Activated CD4-positive, alpha-beta T cell treated with anti-CD3 and anti-CD28 coated beads, Interleukin-2, amount 10 ng/mL, durations not matched to agents 24 days and 14 days (primary cell): ENCODE measurements at regions of chr4 and their contacts with region 1.

Region 1: DNA sequence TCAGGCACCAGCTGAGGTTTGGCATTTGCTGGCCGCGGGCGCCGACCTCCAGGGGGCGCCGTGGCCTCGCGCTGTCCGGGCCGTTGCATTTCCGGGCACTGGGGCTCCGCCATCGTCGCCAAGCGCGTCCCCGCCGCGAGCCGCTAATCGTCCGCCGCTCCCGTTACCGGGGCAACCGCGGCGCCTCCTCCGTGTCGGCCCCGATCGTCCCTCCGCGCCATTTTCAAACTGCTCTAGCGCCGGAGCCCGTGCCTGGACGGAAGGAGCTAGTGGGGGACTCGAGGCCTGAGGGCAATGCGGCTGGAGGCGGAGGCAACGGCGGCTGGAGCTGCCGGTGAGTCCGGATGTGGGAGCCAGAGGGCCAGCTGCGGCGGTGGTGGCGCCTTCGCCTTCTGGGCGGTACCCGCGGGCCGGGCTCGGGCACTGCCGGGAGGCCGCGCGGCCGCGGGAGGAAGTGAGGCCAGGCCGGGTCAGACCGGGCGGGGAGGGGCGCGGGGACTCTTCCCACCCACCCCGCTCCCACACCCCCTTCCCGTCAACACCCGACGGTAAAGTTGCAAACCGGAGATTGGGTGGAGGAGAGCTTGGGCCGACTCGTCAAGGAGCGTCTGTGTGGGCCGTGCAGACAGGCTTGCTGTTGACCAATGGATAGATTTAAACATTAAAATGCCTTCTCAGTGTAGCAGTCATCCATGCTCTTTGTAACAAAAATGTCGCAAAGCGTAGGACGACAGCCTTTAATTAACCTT is at the start of gene CEP135:
- DNase-seq: peak; percentile 98
- H3K4me3 Mint-ChIP-seq: peak within 1 kb of the TSS; percentile 87
- H3K27ac Mint-ChIP-seq: peak within 1 kb of the TSS; percentile 89
- H3K4me1 Mint-ChIP-seq: peaks cover 33% of the 10 kb centered on the region
- H3K27me3 Mint-ChIP-seq: no peaks in the 10 kb centered on the region
- total RNA-seq, gene CEP135: 16.3 and 16.9 TPM in 2 replicates

Region 2: DNA sequence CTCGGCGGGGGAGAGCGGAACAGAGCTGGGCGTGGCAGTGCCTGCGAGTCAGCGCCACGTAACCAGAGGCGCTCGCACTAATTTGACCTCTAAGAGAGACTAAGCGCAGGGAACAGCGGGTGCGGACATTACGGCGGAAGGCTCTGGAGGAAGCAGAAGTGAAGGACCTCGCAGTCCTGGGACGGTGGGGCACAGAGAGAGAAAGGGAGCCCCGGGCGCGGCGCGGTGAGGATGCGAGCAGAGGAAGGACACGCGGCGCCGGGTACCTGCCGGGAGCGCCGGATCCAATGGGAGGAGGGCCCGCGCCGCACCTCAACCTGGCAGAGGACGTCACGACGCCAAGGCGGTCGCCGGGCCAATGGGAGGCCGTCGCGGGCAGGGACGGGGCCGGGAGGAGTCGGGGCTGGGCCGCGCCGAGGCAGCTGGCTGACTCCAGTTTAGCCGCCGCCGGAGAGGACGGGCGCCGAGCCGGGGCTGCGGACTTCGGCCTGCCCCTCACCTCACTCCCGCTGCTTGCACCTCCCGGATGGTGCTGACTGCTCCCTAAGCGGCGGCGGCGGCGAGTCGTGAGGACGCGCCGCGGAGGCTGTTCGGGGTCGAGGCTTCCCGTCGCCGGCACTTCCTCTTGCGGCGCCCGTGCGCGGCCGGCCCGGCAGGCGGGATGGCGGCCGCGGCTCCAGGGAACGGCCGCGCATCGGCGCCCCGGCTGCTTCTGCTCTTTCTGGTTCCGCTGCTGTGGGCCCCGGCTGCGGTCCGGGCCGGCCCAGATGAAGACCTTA is 553.2 kb before region 1 on chr4 and contains the start of gene TMEM165:
- intact Hi-C with region 1: loop called (anchors 5 kb)
- DNase-seq: peak; percentile 97
- H3K4me3 Mint-ChIP-seq: peak within 1 kb of the TSS; percentile 100
- H3K27ac Mint-ChIP-seq: peak within 1 kb of the TSS; percentile 97
- H3K4me1 Mint-ChIP-seq: peaks cover 33% of the 10 kb centered on the region
- H3K27me3 Mint-ChIP-seq: no peaks in the 10 kb centered on the region
- total RNA-seq, gene TMEM165: 87.2 and 99.1 TPM in 2 replicates

Region 3: GRCh38 chr4:55503164-55503563 is 445.7 kb before region 1 on chr4:
- intact Hi-C with region 1: no loop called
- DNase-seq: no peak
- H3K4me3 Mint-ChIP-seq: no peak overlapping the region
- H3K27ac Mint-ChIP-seq: no peak overlapping the region
- H3K4me1 Mint-ChIP-seq: peaks cover 2% of the 10 kb centered on the region
- H3K27me3 Mint-ChIP-seq: no peaks in the 10 kb centered on the region

Region 4: GRCh38 chr4:55866973-55867574 is 81.8 kb before region 1 on chr4:
- intact Hi-C with region 1: loop called (anchors 1 kb)
- DNase-seq: peak; percentile 69
- H3K4me3 Mint-ChIP-seq: no peak overlapping the region
- H3K27ac Mint-ChIP-seq: no peak overlapping the region
- H3K4me1 Mint-ChIP-seq: peaks cover 19% of the 10 kb centered on the region
- H3K27me3 Mint-ChIP-seq: no peaks in the 10 kb centered on the region

Region 5: DNA sequence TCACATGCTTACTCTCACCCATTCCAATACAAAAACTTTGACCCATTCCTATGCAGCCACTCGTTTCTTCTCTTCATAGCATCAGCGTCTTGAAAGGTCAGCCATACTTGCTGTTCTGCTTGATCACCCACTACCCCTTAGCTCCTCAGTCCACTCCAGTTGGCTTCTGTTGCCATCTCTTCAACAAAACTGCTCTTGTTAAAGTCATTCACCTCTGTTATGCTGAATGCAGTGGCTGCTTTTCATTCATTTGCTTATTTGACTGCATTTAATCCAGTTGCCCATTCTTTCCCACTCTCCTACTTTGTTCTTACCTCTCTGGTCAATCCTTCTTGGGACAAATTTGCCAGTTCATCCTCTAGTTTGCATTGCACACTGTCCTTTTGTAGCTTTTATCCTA is 24.8 kb after region 1 on chr4:
- intact Hi-C with region 1: no loop called
- DNase-seq: no peak
- H3K4me3 Mint-ChIP-seq: no peak overlapping the region
- H3K27ac Mint-ChIP-seq: no peak overlapping the region
- H3K4me1 Mint-ChIP-seq: no peaks in the 10 kb centered on the region
- H3K27me3 Mint-ChIP-seq: no peaks in the 10 kb centered on the region

Region 6: DNA sequence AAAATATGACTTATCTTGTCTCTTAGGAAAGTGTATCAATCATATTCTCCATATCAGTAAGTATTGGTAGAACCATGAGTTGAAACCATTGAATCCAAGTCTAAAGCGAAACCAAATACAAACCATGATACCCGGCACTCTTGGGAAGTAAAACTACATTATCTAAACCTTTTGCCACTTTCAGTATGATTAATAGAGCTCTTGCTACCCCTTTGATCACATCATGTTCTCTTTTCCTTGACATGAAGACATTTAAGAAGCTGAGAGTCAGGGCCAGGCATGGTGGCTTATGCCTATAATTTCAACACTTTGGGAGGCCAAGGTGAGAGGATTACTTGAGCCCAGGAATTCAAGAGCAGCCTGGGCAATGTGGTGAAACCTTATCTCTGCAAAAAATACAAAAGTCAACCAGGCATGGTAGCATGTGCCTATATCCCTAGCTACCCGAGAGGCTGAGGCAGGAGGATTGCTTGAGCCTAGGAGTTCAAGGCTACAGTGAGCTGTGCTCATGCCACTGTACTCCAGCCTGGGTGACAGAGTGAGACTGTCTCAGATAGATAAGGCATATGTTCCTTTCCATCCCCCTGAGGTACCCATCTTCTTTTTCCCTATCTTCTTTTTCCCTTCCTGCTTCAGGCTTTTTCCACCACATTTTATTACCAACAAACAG is 45.2 kb after region 1 on chr4:
- intact Hi-C with region 1: loop called (anchors 1 kb)
- DNase-seq: peak; percentile 64
- H3K4me3 Mint-ChIP-seq: peak overlapping the region; percentile 35
- H3K27ac Mint-ChIP-seq: peak overlapping the region; percentile 62
- H3K4me1 Mint-ChIP-seq: peaks cover 25% of the 10 kb centered on the region
- H3K27me3 Mint-ChIP-seq: no peaks in the 10 kb centered on the region

Region 7: GRCh38 chr4:56007154-56007553 is 58.3 kb after region 1 on chr4:
- intact Hi-C with region 1: no loop called
- DNase-seq: no peak
- H3K4me3 Mint-ChIP-seq: no peak overlapping the region
- H3K27ac Mint-ChIP-seq: no peak overlapping the region
- H3K4me1 Mint-ChIP-seq: peaks cover 2% of the 10 kb centered on the region
- H3K27me3 Mint-ChIP-seq: no peaks in the 10 kb centered on the region

Region 8: DNA sequence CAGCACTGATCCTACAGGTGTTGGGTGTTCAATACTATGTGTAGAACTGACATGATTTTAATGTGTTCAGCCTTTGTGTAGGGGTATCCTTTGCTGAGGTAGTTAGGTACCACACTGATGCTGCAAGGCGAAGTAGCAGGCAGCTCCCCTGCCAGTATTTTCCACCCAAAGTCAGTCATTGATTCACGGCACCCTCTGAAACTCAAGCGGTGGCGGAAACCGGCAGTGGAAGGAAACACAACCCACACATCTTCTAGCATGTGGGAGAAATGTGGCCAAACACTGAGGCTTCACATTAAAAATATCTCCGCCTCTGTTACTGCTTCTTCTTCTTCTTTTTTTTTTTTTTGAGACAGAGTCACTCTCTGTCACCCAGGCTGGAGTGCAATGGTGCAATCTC is 312.1 kb after region 1 on chr4:
- intact Hi-C with region 1: loop called (anchors 2 kb)
- DNase-seq: peak; percentile 81
- H3K4me3 Mint-ChIP-seq: peak overlapping the region; percentile 15
- H3K27ac Mint-ChIP-seq: peak overlapping the region; percentile 37
- H3K4me1 Mint-ChIP-seq: peaks cover 17% of the 10 kb centered on the region
- H3K27me3 Mint-ChIP-seq: peaks cover 34% of the 10 kb centered on the region

Region 9: GRCh38 chr4:56435306-56435926 is 486.5 kb after region 1 on chr4 and contains the start of gene PPAT:
- intact Hi-C with region 1: loop called (anchors 1 kb)
- DNase-seq: peak; percentile 100
- H3K4me3 Mint-ChIP-seq: peak within 1 kb of the TSS; percentile 89
- H3K27ac Mint-ChIP-seq: peak within 1 kb of the TSS; percentile 95
- H3K4me1 Mint-ChIP-seq: peaks cover 41% of the 10 kb centered on the region
- H3K27me3 Mint-ChIP-seq: no peaks in the 10 kb centered on the region
- total RNA-seq, gene PPAT: 60.8 and 63.6 TPM in 2 replicates

Region 10: DNA sequence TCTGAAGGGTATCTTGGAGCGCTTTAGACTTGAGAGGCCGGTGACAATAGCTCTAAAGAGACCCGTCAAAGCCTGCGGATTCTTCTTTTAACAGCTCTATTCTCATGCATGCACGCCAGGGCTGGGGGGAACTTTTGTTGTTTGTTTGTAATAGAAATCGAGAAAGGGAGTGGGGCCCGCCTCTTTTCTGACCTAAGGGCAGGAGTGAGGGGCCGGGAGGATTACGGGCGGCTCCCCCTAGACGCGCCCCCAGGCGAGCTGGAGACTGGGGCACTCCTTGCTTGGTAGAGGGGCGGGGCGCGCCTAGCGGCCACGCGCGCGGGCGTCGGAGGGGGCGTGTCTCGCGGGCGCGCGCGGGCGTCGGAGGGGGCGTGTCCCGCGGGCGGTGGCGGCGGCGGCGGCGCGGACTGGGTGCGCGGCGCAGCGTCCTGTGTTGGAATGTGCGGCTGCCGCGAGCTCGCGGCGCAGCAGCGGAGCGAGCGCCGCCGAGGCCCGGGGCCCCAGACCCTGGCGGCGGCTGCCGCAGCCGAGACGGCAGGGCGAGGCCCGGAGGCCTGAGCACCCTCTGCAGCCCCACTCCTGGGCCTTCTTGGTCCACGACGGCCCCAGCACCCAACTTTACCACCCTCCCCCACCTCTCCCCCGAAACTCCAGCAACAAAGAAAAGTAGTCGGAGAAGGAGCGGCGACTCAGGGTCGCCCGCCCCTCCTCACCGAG is 958.7 kb after region 1 on chr4 and contains the start of gene REST:
- intact Hi-C with region 1: loop called (anchors 2 kb)
- DNase-seq: peak; percentile 96
- H3K4me3 Mint-ChIP-seq: peak within 1 kb of the TSS; percentile 92
- H3K27ac Mint-ChIP-seq: peak within 1 kb of the TSS; percentile 87
- H3K4me1 Mint-ChIP-seq: peaks cover 35% of the 10 kb centered on the region
- H3K27me3 Mint-ChIP-seq: peaks cover 9% of the 10 kb centered on the region
- total RNA-seq, gene REST: 53.4 and 56.0 TPM in 2 replicates